ENCODE measurements at regions of chr16 and their contacts with region 1.

Region 1: DNA sequence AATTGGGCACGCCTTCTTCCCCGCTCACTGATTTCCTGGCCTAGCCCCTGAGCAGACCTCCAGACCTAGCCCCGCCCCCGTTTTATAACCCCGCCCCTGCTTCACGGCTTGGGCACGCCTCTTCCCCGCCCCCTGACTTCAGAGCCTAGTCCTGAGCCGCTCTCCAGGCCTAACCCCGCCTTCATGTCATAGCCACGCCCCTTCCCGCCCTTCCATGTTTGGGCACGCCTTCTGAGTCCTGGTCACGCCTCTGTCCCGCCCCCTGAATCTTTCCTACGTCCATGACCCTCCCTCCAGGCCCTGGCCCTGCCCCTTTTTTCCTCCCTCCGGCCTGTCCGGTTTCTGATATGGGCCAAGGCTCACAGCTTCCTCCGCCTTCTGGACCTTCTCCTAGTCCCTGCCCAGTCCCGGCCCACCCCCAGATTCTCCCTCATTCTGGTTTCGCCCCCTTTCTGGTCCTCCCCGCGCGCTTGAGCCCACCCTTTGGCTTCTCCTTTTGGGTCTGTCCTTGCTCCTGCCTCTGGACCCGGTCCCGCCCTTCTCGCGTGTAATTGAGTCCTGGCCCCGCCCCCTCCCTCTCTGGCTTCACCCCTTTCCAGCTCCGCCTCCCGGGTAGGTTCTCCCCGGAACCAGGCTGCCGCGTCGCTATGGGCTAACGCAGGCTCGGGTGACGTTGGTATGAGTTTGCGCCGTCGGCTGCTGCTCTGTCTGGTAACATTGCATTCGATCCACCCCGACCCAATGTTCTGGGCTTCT is 15.1 kb upstream of the EEF2K start:
- DNase-seq: peak; percentile 100
- H3K4me3 ChIP-seq: peak overlapping the region; percentile 70
- H3K27ac ChIP-seq: peak overlapping the region; percentile 98
- H3K27me3 ChIP-seq: no peaks in the 10 kb centered on the region
- CTCF ChIP-seq: no peak

Region 2: DNA sequence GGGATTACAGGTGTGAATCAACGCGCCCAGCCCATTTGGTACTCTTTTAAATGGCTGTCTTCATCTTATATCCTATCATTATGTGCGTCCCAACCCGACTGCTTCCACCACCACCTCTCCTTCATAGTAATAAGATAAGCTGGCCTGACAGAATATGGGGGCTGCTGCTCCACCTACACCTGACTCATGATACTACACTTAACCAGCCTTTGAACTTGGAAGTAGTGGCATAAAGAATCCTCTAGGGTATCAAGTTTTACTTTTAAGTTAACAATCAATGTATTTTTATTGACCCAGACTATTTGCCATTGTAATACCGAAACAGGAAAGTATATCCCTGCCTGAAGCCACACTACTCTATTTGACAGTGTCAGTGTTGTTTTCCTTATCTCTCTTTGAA is 208.8 kb before region 1 on chr16:
- CTCF ChIA-PET with region 1: interaction called, 10 read pairs
- POLR2A ChIA-PET with region 1: no interaction called
- DNase-seq: no peak
- H3K4me3 ChIP-seq: no peak overlapping the region
- H3K27ac ChIP-seq: no peak overlapping the region
- H3K27me3 ChIP-seq: no peaks in the 10 kb centered on the region
- CTCF ChIP-seq: no peak

Region 3: DNA sequence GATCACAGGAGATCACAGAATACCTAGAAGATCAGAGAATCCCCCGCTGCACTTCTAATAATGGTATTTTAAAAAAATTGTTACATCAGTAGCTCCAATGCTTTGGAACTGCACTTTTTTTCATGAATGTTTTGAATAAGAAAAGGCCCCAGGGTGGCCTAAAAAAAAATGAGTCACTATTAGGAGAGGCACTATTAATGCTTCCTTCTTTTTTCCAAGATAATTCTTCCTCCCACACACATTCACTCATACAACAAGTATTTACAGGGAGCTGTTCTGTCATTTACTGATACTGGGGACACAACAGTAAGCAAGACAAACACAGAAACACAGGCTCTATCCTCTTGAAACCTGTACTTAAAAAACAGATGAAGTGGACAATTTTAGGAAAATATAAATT is 189.4 kb before region 1 on chr16:
- CTCF ChIA-PET with region 1: interaction called, 187 read pairs
- POLR2A ChIA-PET with region 1: no interaction called
- DNase-seq: peak; percentile 13
- H3K4me3 ChIP-seq: no peak overlapping the region
- H3K27ac ChIP-seq: no peak overlapping the region
- H3K27me3 ChIP-seq: no peaks in the 10 kb centered on the region
- CTCF ChIP-seq: no peak

Region 4: DNA sequence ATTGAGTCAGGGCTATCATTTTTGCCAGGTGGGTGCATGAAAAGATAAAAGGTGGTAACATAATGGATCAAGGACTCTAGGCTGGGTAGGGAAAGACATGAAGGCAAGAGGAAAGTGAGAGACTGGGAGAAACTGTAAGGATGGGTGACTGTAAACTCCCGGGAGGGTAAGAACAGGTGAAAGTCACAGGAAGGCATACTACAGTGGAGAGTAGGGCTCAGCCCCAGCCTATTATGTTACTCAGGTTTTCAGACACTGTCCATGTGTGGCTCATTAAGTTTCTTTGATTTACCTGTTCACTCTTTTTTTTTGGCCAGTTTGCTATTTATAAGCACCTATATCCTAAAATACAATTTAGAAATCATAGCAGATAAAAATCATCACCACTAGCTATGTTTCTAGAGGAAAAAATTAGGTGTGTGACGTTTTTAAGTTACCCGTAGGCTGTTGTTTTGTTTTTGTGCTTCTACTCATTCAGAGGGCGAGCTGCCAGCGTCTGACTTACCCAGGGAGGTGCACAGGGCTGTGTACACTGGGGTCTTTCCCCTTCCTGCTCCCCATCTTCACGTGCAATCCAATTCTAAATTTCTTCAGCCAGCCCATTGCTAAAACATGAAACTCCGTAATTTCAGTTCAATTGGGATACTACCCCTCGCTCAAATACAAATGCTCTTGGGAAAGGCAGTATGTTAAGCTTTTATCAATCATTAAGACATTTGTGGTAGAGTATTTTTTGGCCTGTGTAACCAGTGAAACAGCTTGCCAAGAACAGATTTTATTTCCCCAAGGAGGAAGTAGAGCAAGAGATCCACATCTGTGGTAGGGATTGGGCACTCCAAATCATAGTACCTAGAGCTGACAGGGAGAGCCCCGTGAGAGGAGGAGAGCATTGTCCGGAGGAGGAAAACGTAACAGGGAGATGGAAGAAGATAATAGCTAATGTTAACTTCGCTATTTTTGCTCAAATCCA is 120.3 kb before region 1 on chr16:
- CTCF ChIA-PET with region 1: interaction called, 10 read pairs
- POLR2A ChIA-PET with region 1: no interaction called
- DNase-seq: no peak
- H3K4me3 ChIP-seq: peak overlapping the region; percentile 23; the same call in 1 of the 2 replicates
- H3K27ac ChIP-seq: peak overlapping the region; percentile 25
- H3K27me3 ChIP-seq: no peaks in the 10 kb centered on the region
- CTCF ChIP-seq: no peak

Region 5: GRCh38 chr16:22109258-22109898 is 81.6 kb before region 1 on chr16:
- CTCF ChIA-PET with region 1: interaction called, 12 read pairs
- POLR2A ChIA-PET with region 1: no interaction called
- DNase-seq: no peak
- H3K4me3 ChIP-seq: no peak overlapping the region
- H3K27ac ChIP-seq: no peak overlapping the region
- H3K27me3 ChIP-seq: peaks cover 28% of the 10 kb centered on the region
- CTCF ChIP-seq: no peak

Region 6: DNA sequence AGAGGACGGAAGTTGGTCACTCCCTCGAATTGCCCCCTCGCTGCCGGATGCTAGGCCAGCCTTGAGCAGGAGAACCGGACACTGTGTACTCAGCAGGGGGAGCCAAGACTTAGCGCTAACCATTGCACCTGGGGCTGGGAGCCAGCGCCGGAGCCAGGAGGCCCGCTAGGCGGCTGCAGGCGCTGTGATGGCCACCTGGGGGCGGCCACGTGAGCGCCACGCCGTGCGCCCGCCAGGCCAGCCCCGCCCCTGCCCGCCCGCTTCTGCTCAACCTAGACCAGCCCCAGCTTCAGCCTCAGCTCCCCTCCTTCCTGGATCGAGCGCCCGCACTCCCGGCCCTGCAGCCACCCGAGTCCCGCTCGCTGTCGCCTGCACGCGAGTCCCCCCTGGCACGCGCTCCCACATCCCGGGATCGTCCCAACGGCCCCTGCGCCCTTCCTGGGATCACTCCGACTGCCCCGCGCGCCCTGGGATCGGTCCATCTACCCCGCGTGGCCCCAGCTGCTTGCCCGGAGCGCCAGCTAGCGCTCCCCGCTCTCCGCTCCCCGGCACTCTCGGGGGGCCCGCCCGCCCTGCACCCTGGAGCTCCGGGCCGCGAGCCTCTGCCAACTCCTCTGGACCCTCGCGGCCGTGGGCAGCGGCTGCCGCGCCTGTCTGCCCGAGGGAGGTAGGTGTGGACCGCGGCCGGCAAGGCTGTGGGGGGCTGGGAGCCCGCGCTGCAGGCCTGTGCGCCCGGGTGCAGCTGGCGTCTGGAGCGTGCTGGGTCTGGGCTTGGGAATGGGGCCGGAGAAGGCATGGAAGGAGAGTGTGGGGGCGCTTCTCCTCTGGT is 15.3 kb after region 1 on chr16 and contains the start of gene EEF2K:
- CTCF ChIA-PET with region 1: interaction called, 4 read pairs
- POLR2A ChIA-PET with region 1: interaction called, 10 read pairs
- DNase-seq: peak; percentile 86
- H3K4me3 ChIP-seq: peak within 1 kb of the TSS; percentile 78
- H3K27ac ChIP-seq: peak within 1 kb of the TSS; percentile 73
- H3K27me3 ChIP-seq: no peaks in the 10 kb centered on the region
- CTCF ChIP-seq: peak; percentile 63
- polyA plus RNA-seq, gene EEF2K: 9.6 and 13.5 TPM in 2 replicates

Measured in AG04450 (cell line).